CD14-positive monocyte (primary cell): ENCODE measurements at regions of chr20 and their contacts with region 1.

Region 1: GRCh38 chr20:38269040-38269439 is 8.5 kb upstream of the KIAA1755 start:
- DNase-seq: peak in 1 of 3 donors; percentile 40
- H3K4me3 ChIP-seq: no peak overlapping the region
- H3K4me3 Mint-ChIP-seq: peak overlapping the region in 1 of 2 donors; percentile 27
- H3K27ac ChIP-seq: no peak overlapping the region
- H3K27ac Mint-ChIP-seq: no peak overlapping the region
- H3K4me1 ChIP-seq: peaks cover 14 to 20% of the 10 kb centered on the region in 2 donors
- H3K4me1 Mint-ChIP-seq: peaks cover 19% of the 10 kb centered on the region
- H3K27me3 ChIP-seq: peaks cover 0 to 7% of the 10 kb centered on the region in 2 donors
- H3K27me3 Mint-ChIP-seq: peaks cover 13 to 23% (median 15%) of the 10 kb centered on the region in 3 donors
- CTCF ChIP-seq: no peak

Region 2: GRCh38 chr20:38290832-38291581 is 22.0 kb after region 1 on chr20:
- intact Hi-C with region 1: loop called in 1 of 2 experiments (anchors 1 kb)
- DNase-seq: peak in 1 of 3 donors; percentile 34
- H3K4me3 ChIP-seq: no peak overlapping the region
- H3K4me3 Mint-ChIP-seq: no peak overlapping the region
- H3K27ac ChIP-seq: peak overlapping the region; percentile 62
- H3K27ac Mint-ChIP-seq: peak overlapping the region; percentile 62 to 89 (median 85)
- H3K4me1 ChIP-seq: peaks cover 83 to 88% of the 10 kb centered on the region in 2 donors
- H3K4me1 Mint-ChIP-seq: peaks cover 83% of the 10 kb centered on the region
- H3K27me3 ChIP-seq: no peaks in the 10 kb centered on the region
- H3K27me3 Mint-ChIP-seq: peaks cover 3 to 6% (median 5%) of the 10 kb centered on the region in 3 donors
- CTCF ChIP-seq: peak; percentile 27